ENCODE measurements at regions of chr17 and their contacts with region 1.

Region 1: GRCh38 chr17:71472809-71473789 is 647.7 kb upstream of the SOX9 start:
- DNase-seq: no peak
- ATAC-seq: no peak
- H3K4me3 ChIP-seq: no peak overlapping the region
- H3K4me3 Mint-ChIP-seq: no peak overlapping the region
- H3K27ac ChIP-seq: no peak overlapping the region
- H3K27ac Mint-ChIP-seq: no peak overlapping the region
- H3K4me1 ChIP-seq: no peaks in the 10 kb centered on the region
- H3K4me1 Mint-ChIP-seq: no peaks in the 10 kb centered on the region
- H3K27me3 ChIP-seq: no peaks in the 10 kb centered on the region
- H3K27me3 Mint-ChIP-seq: no peaks in the 10 kb centered on the region
- CTCF ChIP-seq: no peak

Region 2: DNA sequence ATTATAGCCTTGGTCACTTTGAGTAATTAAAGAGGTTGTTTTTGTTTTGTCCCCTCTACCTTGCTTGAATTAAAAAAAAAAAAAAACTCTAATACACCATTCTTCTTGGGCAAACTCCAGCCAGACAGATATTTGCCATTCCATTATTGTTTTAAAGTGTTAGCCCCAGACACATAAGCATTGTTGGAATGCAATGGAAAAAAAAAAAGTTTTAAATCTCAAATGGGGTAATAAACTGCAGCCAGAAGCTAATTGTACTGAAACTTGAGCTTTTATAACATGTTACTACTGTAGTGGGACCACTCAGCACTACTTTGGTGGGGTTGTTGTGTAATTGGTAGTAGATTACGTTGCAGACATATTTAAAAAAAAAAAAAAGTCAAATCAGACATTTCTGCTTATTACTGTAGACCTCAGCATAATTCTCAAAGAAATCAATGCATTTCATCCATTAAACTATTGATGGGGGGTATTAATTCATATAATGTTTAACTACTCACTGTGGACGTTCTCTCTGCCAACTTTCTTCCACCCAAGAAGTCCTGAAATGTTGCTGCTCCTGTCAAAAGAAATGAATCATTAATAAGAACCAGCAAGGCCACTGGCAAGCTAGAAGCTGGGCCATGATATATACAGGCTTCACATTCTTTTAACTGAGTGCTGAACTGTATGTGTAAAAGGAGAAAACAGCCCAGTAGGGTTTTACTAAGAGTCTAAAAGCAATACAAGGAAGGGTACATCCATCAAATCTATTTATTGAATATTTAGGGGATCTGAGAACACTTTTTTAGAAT is 21.2 kb after region 1 on chr17:
- CTCF ChIA-PET with region 1: no interaction called
- POLR2A ChIA-PET with region 1: no interaction called
- intact Hi-C with region 1: no loop called
- DNase-seq: no peak
- ATAC-seq: no peak
- H3K4me3 ChIP-seq: no peak overlapping the region
- H3K4me3 Mint-ChIP-seq: no peak overlapping the region
- H3K27ac ChIP-seq: no peak overlapping the region
- H3K27ac Mint-ChIP-seq: no peak overlapping the region
- H3K4me1 ChIP-seq: no peaks in the 10 kb centered on the region
- H3K4me1 Mint-ChIP-seq: no peaks in the 10 kb centered on the region
- H3K27me3 ChIP-seq: no peaks in the 10 kb centered on the region
- H3K27me3 Mint-ChIP-seq: no peaks in the 10 kb centered on the region
- CTCF ChIP-seq: no peak

Region 3: GRCh38 chr17:71530248-71530647 is 57.1 kb after region 1 on chr17:
- CTCF ChIA-PET with region 1: no interaction called
- POLR2A ChIA-PET with region 1: no interaction called
- intact Hi-C with region 1: loop called in 1 of 2 experiments (anchors 10 kb)
- DNase-seq: no peak
- ATAC-seq: no peak
- H3K4me3 ChIP-seq: no peak overlapping the region
- H3K4me3 Mint-ChIP-seq: no peak overlapping the region
- H3K27ac ChIP-seq: no peak overlapping the region
- H3K27ac Mint-ChIP-seq: no peak overlapping the region
- H3K4me1 ChIP-seq: no peaks in the 10 kb centered on the region
- H3K4me1 Mint-ChIP-seq: no peaks in the 10 kb centered on the region
- H3K27me3 ChIP-seq: no peaks in the 10 kb centered on the region
- H3K27me3 Mint-ChIP-seq: no peaks in the 10 kb centered on the region
- CTCF ChIP-seq: no peak

Region 4: GRCh38 chr17:71633391-71633849 is 160.3 kb after region 1 on chr17:
- CTCF ChIA-PET with region 1: no interaction called
- POLR2A ChIA-PET with region 1: no interaction called
- intact Hi-C with region 1: no loop called
- DNase-seq: no peak
- ATAC-seq: no peak
- H3K4me3 ChIP-seq: no peak overlapping the region
- H3K4me3 Mint-ChIP-seq: no peak overlapping the region
- H3K27ac ChIP-seq: no peak overlapping the region
- H3K27ac Mint-ChIP-seq: no peak overlapping the region
- H3K4me1 ChIP-seq: no peaks in the 10 kb centered on the region
- H3K4me1 Mint-ChIP-seq: no peaks in the 10 kb centered on the region
- H3K27me3 ChIP-seq: no peaks in the 10 kb centered on the region
- H3K27me3 Mint-ChIP-seq: no peaks in the 10 kb centered on the region
- CTCF ChIP-seq: no peak

Measured in CD4-positive, alpha-beta T cell (primary cell).